ENCODE measurements at regions of chr20 and their contacts with region 1.

Region 1: DNA sequence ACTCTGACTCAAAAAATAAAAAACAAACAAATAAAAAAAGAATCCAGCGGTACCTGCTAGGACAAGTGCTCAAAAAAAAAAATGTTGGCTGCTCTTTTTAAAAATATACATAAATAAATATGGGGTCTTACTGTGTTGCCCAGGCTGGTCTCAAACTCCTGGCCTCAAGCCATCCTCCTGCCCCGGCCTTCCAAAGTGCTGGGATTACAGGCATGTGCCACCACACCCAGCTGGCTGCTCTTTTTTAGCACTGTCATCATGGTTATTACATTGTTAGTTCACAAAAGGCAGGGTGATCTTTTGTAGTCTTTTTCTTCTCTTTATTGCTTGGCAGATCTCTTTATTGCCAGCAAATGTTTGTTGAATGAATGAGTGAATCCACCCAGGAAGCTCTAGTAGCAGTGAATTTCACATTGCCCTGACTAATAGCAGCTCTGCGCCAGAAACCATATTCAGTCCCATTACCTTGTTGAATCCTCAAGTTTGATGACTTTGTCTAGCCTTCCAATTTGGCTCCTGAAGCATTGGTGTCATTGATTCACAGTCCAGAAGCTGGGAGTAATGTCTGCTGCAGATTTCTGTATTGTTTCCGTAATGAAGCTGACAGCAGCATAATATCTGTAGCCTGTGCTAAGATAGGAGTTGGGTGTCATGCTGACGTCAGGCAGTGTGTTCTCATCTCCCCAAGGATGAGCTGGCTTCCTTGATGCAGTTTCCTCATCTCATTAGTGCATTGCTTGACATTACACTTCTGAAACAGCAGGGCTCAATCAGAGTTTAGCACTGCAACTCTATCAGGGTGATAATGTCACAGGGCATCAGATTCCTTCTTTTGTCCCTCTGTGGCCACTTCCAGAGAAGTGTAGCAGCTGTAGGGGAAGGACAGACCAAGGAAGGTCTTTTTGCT is 84.9 kb upstream of the TGM3 start:
- DNase-seq: peak in 1 of 3 donors; percentile 40
- ATAC-seq: peak; percentile 39 to 67 (median 57)
- H3K4me3 ChIP-seq: no peak overlapping the region
- H3K27ac ChIP-seq: peak overlapping the region in 1 of 3 donors; percentile 49
- H3K4me1 ChIP-seq: peaks cover 0 to 5% (median 0%) of the 10 kb centered on the region in 4 donors
- H3K27me3 ChIP-seq: no peaks in the 10 kb centered on the region
- CTCF ChIP-seq: no peak
- POLR2A ChIP-seq: no peak

Region 2: GRCh38 chr20:1576641-1577040 is 634.3 kb before region 1 on chr20:
- intact Hi-C with region 1: no loop called
- DNase-seq: no peak
- ATAC-seq: no peak
- H3K4me3 ChIP-seq: no peak overlapping the region
- H3K27ac ChIP-seq: no peak overlapping the region
- H3K4me1 ChIP-seq: no peaks in the 10 kb centered on the region
- H3K27me3 ChIP-seq: no peaks in the 10 kb centered on the region
- CTCF ChIP-seq: no peak
- POLR2A ChIP-seq: no peak

Region 3: DNA sequence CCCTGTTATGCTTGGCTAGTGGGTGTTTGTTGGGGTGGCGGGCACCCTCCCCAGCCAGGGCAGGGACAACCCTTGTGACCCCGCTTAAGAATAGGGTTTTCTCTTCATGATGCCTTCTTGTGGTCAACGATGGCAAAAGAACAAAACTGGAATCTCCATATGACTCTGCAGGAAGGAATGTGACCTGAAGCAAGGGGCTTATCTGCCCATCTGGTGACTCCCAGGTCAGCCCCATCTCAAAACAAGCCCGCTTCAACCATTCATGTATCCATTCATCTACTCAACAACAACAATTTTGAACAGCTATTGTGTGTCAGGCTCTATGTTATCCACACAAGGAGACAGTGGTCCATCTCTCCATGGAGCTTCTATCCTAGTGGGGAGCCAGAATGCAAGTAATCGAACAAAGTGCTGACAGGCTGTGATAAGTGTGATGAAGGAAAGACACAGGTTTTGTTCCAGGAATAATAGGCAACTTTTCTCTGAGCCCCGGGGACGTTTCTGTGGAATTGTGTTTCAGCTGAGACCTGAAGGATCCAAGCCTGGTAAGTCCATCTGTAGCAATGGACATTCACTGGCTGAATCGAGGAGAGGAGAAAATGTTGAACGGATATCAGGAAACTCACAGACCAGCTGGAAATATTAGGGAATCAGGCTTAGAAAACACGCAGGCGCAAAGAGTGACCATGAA is 139.1 kb after region 1 on chr20:
- intact Hi-C with region 1: loop called in 1 of 2 experiments (anchors 10 kb)
- DNase-seq: no peak
- ATAC-seq: no peak
- H3K4me3 ChIP-seq: no peak overlapping the region
- H3K27ac ChIP-seq: no peak overlapping the region
- H3K4me1 ChIP-seq: peaks cover 0 to 4% (median 0%) of the 10 kb centered on the region in 4 donors
- H3K27me3 ChIP-seq: no peaks in the 10 kb centered on the region
- CTCF ChIP-seq: no peak
- POLR2A ChIP-seq: no peak

Region 4: DNA sequence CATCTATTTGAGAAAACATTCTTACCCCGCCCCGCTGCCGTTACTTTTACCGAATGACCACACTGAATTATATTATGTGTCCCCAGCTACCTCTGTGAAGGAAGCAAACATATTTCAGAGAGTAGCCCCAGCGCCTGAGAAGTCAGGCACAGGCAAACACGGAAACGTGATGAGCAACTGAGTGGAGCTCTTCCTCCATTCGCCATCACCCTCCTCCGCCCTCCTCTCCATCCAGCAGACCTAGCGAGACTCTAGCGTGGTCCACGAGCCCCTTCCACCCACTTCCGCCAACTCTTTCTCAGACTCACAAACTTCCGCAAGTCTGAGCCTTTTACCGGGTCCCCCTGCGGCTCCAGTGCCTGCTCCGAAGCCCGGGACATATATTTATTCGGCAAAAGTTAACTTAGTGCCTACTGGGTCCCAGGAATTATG is 259.1 kb after region 1 on chr20:
- intact Hi-C with region 1: loop called in 1 of 2 experiments (anchors 10 kb)
- DNase-seq: peak in 2 of 3 donors; percentile 52 to 53
- ATAC-seq: peak; percentile 46 to 64 (median 58)
- H3K4me3 ChIP-seq: peak overlapping the region; percentile 82 to 93 (median 89)
- H3K27ac ChIP-seq: peak overlapping the region; percentile 74 to 94 (median 93)
- H3K4me1 ChIP-seq: peaks cover 0 to 11% (median 4%) of the 10 kb centered on the region in 4 donors
- H3K27me3 ChIP-seq: no peaks in the 10 kb centered on the region
- CTCF ChIP-seq: no peak
- POLR2A ChIP-seq: no peak

Measured in right lobe of liver (tissue), 6 donors.